ENCODE measurements at regions of chr9 and their contacts with region 1.

Region 1: DNA sequence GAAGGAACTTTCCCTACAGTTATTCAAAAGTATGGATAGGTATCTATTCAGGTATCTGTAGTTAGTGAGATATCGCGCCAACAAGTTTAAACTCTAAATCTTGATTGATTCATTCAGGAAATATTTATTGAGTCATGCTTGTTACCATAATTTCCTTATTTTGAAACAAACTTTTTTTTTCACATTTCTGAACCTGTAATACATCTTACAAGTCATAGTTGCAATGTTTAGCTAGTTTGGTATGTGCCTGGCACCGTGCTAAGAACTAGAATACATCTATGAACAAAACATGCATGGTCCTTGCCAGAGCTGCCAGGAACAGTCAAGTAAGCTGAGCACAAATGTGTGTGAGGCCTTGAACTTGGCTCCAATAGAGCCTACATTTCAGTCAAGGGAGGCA is 226.4 kb downstream of the PCSK5 start:
- DNase-seq: peak; percentile 53
- H3K4me3 Mint-ChIP-seq: no peak overlapping the region
- H3K27ac Mint-ChIP-seq: peak overlapping the region; percentile 70
- H3K4me1 Mint-ChIP-seq: peaks cover 24% of the 10 kb centered on the region
- H3K27me3 Mint-ChIP-seq: no peaks in the 10 kb centered on the region

Region 2: GRCh38 chr9:75910731-75911130 is 206.2 kb before region 1 on chr9:
- CTCF ChIA-PET with region 1: no interaction called
- intact Hi-C with region 1: loop called (anchors 1 kb)
- DNase-seq: no peak
- H3K4me3 Mint-ChIP-seq: no peak overlapping the region
- H3K27ac Mint-ChIP-seq: no peak overlapping the region
- H3K4me1 Mint-ChIP-seq: peaks cover 58% of the 10 kb centered on the region
- H3K27me3 Mint-ChIP-seq: no peaks in the 10 kb centered on the region

Region 3: DNA sequence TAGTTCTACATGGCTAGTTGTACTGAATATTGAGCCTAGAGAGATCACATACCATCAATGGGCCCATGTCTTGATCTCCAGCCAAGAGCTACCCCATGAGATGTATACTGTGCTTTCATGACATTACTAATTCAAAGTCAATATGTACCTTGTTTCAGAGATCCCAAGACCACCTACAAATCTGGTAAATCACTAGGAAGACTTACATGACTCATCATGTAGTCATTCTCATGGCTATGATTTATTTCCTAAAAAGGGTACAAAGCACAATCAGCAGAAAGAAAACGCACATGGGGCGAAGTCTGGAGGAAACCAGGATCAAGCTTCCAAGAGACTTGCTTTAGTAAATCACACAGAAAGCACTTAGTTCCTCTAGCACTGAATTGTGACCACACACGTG is 123.5 kb before region 1 on chr9:
- CTCF ChIA-PET with region 1: interaction called, 6 read pairs
- intact Hi-C with region 1: loop called (anchors 2 kb)
- DNase-seq: no peak
- H3K4me3 Mint-ChIP-seq: no peak overlapping the region
- H3K27ac Mint-ChIP-seq: peak overlapping the region; percentile 59
- H3K4me1 Mint-ChIP-seq: peaks cover 68% of the 10 kb centered on the region
- H3K27me3 Mint-ChIP-seq: no peaks in the 10 kb centered on the region

Region 4: GRCh38 chr9:76023715-76024195 is 93.2 kb before region 1 on chr9:
- CTCF ChIA-PET with region 1: no interaction called
- intact Hi-C with region 1: loop called (anchors 1 kb)
- DNase-seq: peak; percentile 64
- H3K4me3 Mint-ChIP-seq: peak overlapping the region; percentile 68
- H3K27ac Mint-ChIP-seq: peak overlapping the region; percentile 83
- H3K4me1 Mint-ChIP-seq: peaks cover 92% of the 10 kb centered on the region
- H3K27me3 Mint-ChIP-seq: no peaks in the 10 kb centered on the region

Region 5: DNA sequence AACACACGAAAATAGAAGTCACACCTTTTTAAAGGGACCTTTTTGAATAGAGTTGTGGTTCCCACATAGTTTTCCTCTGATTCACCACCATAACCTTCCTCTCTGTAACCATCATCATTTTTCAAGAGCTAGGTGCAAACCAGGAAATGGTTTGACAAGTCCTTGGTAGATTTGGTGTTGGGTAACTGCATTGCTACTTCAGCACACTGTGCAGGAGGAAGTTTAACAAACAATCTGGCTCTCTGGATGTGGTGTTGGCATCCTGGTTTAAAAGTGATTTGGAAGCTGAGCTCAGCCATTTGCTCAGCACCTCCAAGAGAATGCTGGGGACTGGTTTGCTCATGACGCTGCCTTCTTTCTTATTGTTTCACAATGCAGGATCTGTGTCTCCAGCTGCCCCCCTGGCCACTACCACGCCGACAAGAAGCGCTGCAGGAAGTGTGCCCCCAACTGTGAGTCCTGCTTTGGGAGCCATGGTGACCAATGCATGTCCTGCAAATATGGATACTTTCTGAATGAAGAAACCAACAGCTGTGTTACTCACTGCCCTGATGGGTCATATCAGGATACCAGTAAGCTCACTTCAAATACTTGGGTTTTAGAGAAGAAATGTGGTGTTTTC is 64.2 kb after region 1 on chr9:
- CTCF ChIA-PET with region 1: no interaction called
- intact Hi-C with region 1: loop called (anchors 1 kb)
- DNase-seq: peak; percentile 10
- H3K4me3 Mint-ChIP-seq: no peak overlapping the region
- H3K27ac Mint-ChIP-seq: no peak overlapping the region
- H3K4me1 Mint-ChIP-seq: peaks cover 14% of the 10 kb centered on the region
- H3K27me3 Mint-ChIP-seq: no peaks in the 10 kb centered on the region

Measured in activated naive CD4-positive, alpha-beta T cell treated with anti-CD3 and anti-CD28 coated beads for 36 hours (primary cell).